ENCODE measurements at regions of chr19 and their contacts with region 1.

Region 1: GRCh38 chr19:10259162-10259905 is 7.3 kb downstream of the MRPL4 start:
- DNase-seq: peak; percentile 79
- H3K4me3 ChIP-seq: no peak overlapping the region
- H3K27ac ChIP-seq: no peak overlapping the region
- H3K4me1 ChIP-seq: no peaks in the 10 kb centered on the region
- H3K27me3 ChIP-seq: no peaks in the 10 kb centered on the region
- CTCF ChIP-seq: peak; percentile 63 to 80
- POLR2A ChIP-seq: no peak

Region 2: GRCh38 chr19:10243606-10244005 is 15.7 kb before region 1 on chr19:
- CTCF ChIA-PET with region 1: no interaction called
- POLR2A ChIA-PET with region 1: no interaction called
- dilution Hi-C with region 1: no loop called
- intact Hi-C with region 1: no loop called
- DNase-seq: no peak
- H3K4me3 ChIP-seq: no peak overlapping the region
- H3K27ac ChIP-seq: no peak overlapping the region
- H3K4me1 ChIP-seq: no peaks in the 10 kb centered on the region
- H3K27me3 ChIP-seq: no peaks in the 10 kb centered on the region
- CTCF ChIP-seq: no peak
- POLR2A ChIP-seq: no peak

Region 3: DNA sequence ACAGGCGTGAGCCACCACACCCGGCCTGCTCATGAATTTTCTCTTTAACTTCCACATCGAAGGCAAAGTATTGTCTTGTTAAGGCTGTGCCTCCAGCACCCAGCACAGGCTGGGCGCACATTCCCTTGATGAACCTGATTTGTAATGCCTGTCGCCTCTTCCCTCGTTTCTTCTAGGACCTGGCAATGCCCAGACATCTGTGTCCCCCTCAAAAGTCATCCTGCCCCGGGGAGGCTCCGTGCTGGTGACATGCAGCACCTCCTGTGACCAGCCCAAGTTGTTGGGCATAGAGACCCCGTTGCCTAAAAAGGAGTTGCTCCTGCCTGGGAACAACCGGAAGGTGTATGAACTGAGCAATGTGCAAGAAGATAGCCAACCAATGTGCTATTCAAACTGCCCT is 15.3 kb after region 1 on chr19:
- CTCF ChIA-PET with region 1: interaction called, 127 read pairs
- POLR2A ChIA-PET with region 1: no interaction called
- dilution Hi-C with region 1: no loop called
- intact Hi-C with region 1: no loop called
- DNase-seq: no peak
- H3K4me3 ChIP-seq: no peak overlapping the region
- H3K27ac ChIP-seq: no peak overlapping the region
- H3K4me1 ChIP-seq: peaks cover 24% of the 10 kb centered on the region
- H3K27me3 ChIP-seq: no peaks in the 10 kb centered on the region
- CTCF ChIP-seq: no peak
- POLR2A ChIP-seq: no peak

Region 4: DNA sequence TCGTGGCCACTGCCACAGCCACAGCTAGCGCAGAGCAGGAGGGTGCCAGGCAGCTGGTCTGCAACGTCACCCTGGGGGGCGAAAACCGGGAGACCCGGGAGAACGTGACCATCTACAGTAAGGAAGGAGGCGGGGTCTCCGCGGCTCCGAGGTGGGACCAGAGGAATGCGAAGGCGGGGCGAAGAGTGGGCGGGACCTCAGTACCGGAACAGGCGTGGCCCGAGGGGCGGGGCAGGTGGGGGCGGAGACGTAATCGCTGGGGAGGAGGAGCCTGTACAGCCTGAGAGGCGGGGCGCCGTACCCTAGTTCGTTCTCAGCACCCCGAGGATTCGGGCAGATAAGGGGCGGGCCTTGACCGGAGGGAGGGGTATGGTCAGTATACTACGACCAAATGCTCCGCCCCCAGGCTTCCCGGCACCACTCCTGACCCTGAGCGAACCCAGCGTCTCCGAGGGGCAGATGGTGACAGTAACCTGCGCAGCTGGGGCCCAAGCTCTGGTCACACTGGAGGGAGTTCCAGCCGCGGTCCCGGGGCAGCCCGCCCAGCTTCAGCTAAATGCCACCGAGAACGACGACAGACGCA is 33.0 kb after region 1 on chr19:
- CTCF ChIA-PET with region 1: interaction called, 11 read pairs
- POLR2A ChIA-PET with region 1: no interaction called
- dilution Hi-C with region 1: no loop called
- intact Hi-C with region 1: no loop called
- DNase-seq: peak; percentile 48
- H3K4me3 ChIP-seq: no peak overlapping the region
- H3K27ac ChIP-seq: no peak overlapping the region
- H3K4me1 ChIP-seq: peaks cover 25% of the 10 kb centered on the region
- H3K27me3 ChIP-seq: peaks cover 54 to 71% of the 10 kb centered on the region in 2 experiments
- CTCF ChIP-seq: no peak
- POLR2A ChIP-seq: no peak

Region 5: GRCh38 chr19:10353793-10354391 is 94.6 kb after region 1 on chr19:
- CTCF ChIA-PET with region 1: interaction called, 11 read pairs
- POLR2A ChIA-PET with region 1: no interaction called
- dilution Hi-C with region 1: no loop called
- intact Hi-C with region 1: no loop called
- DNase-seq: peak; percentile 33
- H3K4me3 ChIP-seq: no peak overlapping the region
- H3K27ac ChIP-seq: no peak overlapping the region
- H3K4me1 ChIP-seq: no peaks in the 10 kb centered on the region
- H3K27me3 ChIP-seq: no peaks in the 10 kb centered on the region
- CTCF ChIP-seq: no peak
- POLR2A ChIP-seq: no peak

Region 6: DNA sequence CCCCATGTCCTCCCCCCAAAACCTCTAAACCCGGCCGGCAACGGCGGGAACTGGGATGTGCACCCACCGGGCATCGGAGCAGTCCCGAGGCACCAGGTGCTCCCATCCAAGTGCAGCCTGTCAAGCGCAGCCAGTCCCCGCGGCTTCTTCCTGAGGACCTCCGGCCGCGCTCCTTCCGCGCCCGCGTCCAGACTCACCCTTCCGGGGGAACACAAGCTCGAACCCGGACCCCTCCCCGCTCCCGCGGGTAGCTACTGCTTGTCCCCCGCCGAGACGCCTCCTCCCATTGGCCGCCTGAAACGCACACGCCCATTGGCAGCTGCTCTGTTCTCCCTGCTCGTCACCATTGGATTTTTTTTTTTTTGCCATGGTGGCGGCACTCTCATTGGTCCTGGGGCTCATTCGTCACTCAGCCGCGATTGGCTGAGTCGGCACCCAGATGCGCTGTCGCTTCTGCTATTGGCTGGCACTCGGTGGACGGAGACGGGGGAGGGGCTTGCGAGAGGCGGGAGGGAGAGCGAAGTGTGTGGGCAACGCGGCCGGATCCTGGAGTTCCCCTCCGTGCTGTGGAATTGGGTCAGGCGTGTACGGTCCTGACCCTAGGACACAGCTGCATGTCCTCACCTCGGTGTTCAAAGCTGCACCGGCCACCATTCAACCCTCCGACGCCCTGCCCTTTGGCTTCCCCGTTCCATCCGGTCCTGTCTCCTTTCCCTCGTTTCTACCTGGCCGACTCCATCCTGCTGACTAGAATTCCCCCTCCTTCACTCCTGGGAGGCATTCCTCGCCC is 121.2 kb after region 1 on chr19 and contains the start of gene TYK2:
- CTCF ChIA-PET with region 1: interaction called, 606 read pairs
- POLR2A ChIA-PET with region 1: interaction called, 6 read pairs
- dilution Hi-C with region 1: no loop called
- intact Hi-C with region 1: no loop called
- DNase-seq: peak; percentile 99
- H3K4me3 ChIP-seq: peak within 1 kb of the TSS; percentile 78 to 96 (median 89)
- H3K27ac ChIP-seq: peak within 1 kb of the TSS; percentile 10
- H3K4me1 ChIP-seq: peaks cover 12% of the 10 kb centered on the region
- H3K27me3 ChIP-seq: no peaks in the 10 kb centered on the region
- CTCF ChIP-seq: no peak
- POLR2A ChIP-seq: peak; percentile 90
- total RNA-seq, gene TYK2: 138 and 142 TPM in 2 replicates

Region 7: DNA sequence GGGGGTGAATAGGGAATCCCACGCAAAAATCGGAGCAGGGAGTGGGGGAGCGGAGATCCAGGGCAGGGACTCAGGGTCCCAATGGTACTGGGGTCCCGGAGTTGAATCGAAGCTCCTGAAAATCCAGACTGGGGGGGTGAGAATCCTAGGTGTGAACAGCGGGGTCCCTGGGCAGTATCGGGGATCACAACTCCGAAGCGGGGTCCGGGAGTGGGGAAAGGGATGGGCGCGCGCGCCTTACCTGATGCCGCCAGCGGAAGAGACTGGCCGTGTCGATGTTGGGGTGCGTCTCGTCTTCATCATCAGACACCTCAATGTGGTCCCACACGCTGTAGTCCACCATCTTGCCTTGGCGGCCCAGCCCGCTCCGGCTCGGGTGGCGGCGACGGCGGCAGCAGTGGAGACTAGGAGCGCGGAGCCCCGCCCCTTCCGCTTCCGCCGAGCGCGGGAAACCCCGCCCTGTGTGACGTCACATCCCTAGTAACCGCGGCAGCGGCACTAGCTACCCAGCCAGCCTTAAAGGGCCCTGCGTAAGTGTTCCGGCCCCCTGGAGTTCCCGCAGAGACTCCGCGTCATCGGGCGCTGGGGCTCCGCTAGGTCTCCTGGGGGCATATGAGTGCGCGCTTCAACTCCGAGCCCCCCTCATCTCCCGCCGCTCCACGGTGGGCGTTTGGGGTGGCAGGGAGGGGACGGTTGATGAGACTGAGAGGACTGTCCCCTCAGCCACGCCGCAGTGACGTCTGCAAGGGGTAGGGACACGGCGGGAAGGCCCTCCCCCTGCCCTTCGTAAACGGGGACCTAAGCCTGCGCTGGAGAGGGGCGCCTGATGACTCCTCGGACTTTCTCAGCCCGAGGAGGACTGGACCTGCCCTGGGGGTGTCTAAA is 144.0 kb after region 1 on chr19 and contains the start of gene CDC37:
- CTCF ChIA-PET with region 1: interaction called, 35 read pairs
- POLR2A ChIA-PET with region 1: interaction called, 3 read pairs
- dilution Hi-C with region 1: no loop called
- intact Hi-C with region 1: no loop called
- DNase-seq: peak; percentile 98
- H3K4me3 ChIP-seq: peak within 1 kb of the TSS; percentile 95 to 98 (median 95)
- H3K27ac ChIP-seq: peak within 1 kb of the TSS; percentile 88
- H3K4me1 ChIP-seq: peaks cover 15% of the 10 kb centered on the region
- H3K27me3 ChIP-seq: peaks cover 12 to 23% of the 10 kb centered on the region in 2 experiments
- CTCF ChIP-seq: no peak
- POLR2A ChIP-seq: peak; percentile 97
- total RNA-seq, gene CDC37: 275 and 300 TPM in 2 replicates

Measured in endothelial cell of umbilical vein (primary cell).